PC-3 (cell line): ENCODE measurements at regions of chr3 and their contacts with region 1.

Region 1: DNA sequence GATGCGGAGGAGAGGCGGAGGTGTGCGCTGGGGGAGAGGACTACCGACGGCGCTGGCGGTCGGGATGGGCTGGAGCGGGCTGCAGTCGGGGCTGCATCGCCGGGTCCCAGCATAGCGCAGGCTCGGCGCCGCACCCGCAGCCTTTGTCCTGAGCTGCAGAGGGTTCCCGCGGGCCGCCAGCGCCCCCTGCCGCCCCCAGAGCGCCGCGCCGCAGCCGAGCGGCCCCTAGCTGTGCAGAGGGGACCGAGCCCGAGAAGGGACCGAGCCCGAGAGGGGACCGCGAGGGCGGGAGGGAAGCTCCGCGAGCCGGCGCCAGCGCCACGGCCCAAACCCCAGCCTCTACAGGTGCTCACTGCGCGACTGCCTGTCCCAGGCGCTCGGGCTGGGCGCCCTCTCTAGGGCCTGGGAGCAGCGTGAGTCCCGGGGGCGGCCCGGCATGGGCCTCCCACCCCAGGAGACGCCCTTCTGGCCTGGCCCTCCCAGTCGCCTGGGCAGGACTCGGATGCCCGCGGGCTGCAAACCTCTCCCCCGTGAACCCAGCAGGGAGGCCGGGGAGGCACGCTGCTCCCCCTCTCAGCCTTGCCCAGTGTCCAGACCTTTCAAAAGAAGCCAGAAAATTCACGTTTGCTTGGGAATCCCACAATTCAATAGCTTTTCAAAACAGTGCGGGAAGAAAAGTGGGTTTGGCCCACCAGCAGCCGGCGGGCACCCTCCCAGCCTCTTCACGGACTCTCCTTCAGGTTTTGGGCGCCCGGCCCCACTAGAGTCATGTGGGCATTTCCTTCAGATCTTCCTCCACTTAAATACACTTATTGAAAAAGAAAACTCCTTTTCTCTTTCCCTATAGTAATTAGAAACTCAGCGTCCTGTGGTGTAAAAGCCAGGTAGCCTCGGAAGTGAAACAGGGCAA is 134.7 kb downstream of the TPRA1 start:
- DNase-seq: peak; percentile 78
- ATAC-seq: peak; percentile 91
- H3K4me3 ChIP-seq: peak overlapping the region; percentile 55
- H3K27ac ChIP-seq: no peak overlapping the region; the same call in 1 of the 2 replicates
- H3K4me1 ChIP-seq: peaks cover 8% of the 10 kb centered on the region
- H3K27me3 ChIP-seq: no peaks in the 10 kb centered on the region
- CTCF ChIP-seq: peak; percentile 79

Region 2: DNA sequence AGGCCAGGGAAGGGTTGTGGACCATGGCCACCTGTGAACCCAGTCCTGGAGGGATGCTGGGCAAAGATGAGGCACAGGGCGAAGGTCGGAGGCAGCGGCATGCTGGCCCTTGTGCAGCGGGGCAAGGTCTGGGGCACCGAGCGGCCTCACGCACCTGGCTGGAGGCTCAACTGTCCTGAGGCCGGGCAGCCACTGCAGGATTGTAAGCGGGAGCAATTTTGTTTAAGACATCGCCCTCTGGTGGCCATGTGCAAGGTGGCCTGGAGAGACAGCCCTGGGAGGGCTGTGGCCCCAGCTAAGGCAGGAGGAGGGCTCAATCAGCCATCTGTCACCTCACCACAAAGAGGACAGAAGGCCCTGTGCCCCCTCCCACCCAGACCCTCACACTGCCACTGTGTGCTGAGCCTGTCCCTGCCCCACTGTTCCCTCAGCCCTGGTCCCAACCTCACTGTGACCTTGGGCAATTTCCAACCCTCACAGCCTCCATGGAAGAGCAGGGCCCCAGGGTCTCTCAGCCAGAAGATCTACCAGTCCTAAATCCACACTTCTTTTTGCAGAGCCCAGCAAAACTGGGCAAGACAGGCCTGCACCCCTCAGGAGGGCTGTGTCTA is 88.5 kb after region 1 on chr3:
- CTCF ChIA-PET with region 1: interaction called, 3 read pairs
- POLR2A ChIA-PET with region 1: no interaction called
- intact Hi-C with region 1: loop called (anchors 5 kb)
- DNase-seq: peak; percentile 70
- ATAC-seq: peak; percentile 81
- H3K4me3 ChIP-seq: no peak overlapping the region
- H3K27ac ChIP-seq: no peak overlapping the region
- H3K4me1 ChIP-seq: no peaks in the 10 kb centered on the region
- H3K27me3 ChIP-seq: no peaks in the 10 kb centered on the region; the same call in 1 of the 2 replicates
- CTCF ChIP-seq: peak; percentile 72